Uterus (tissue), 4 donors: ENCODE measurements at regions of chr14 and their contacts with region 1.

Region 1: GRCh38 chr14:50342221-50343078 is 30.3 kb downstream of the DMAC2L start:
- DNase-seq: peak; percentile 58 to 78
- H3K4me3 ChIP-seq: peak overlapping the region; percentile 13 to 22
- H3K27ac ChIP-seq: peak overlapping the region; percentile 64 to 96
- H3K4me1 ChIP-seq: peaks cover 12 to 26% of the 10 kb centered on the region in 2 donors
- H3K27me3 ChIP-seq: no peaks in the 10 kb centered on the region
- CTCF ChIP-seq: peak; percentile 26 to 56 (median 41)
- POLR2A ChIP-seq: no peak

Region 2: GRCh38 chr14:50099335-50099734 is 243.1 kb before region 1 on chr14:
- intact Hi-C with region 1: no loop called
- DNase-seq: no peak
- H3K4me3 ChIP-seq: no peak overlapping the region
- H3K27ac ChIP-seq: no peak overlapping the region
- H3K4me1 ChIP-seq: no peaks in the 10 kb centered on the region
- H3K27me3 ChIP-seq: no peaks in the 10 kb centered on the region
- CTCF ChIP-seq: no peak
- POLR2A ChIP-seq: no peak

Region 3: DNA sequence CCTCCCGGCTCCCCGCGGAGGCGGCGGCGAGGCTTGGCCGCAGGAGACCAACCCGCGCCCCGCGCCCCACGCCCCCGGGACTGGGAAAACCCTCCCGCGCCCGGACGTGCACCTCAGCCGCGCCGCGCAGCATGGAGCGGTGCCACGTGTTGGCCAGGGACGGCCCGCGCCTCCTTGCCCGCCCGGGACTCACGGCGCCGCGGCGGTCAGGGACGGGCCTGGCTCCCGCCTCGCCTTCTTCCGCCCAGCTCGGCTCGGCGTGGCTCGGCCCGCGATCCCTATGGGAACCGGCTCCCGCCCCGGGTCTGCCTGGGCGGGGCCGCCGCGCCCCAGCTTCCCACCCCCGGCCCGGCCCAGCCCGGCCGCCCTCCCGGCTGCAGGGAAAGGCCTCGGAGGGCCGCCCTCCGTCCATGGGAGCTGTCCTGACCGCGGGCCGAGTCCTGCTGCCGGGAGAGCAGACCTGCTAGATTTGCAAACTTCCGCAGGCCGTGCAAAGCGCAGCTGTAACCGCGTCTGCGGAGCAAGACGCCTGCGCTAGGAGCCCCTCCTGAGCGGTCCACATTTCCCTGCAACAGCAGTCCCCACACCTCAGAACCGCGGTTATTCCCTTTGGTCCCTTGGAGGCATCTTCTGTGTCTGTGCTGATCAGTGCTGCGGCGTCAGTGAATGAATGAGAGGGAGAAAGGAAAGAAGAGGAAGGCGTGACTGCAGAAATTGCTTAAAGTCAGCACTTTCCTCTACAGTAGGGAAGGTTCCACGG is 54.4 kb after region 1 on chr14 and contains the start of gene CDKL1:
- intact Hi-C with region 1: loop called (anchors 10 kb)
- DNase-seq: peak; percentile 58 to 66
- H3K4me3 ChIP-seq: peak within 1 kb of the TSS; percentile 68 to 79
- H3K27ac ChIP-seq: peak within 1 kb of the TSS; percentile 85 to 91
- H3K4me1 ChIP-seq: no peaks in the 10 kb centered on the region
- H3K27me3 ChIP-seq: no peaks in the 10 kb centered on the region
- CTCF ChIP-seq: no peak
- POLR2A ChIP-seq: peak; percentile 34 to 63
- total RNA-seq, gene CDKL1: 6.8 to 38.1 (median 20.1) TPM